ENCODE measurements at regions of chr17 and their contacts with region 1.

Region 1: GRCh38 chr17:48307814-48308411 is 122.1 kb downstream of the SKAP1 start:
- DNase-seq: peak; percentile 72 to 79 (median 75)
- H3K4me3 ChIP-seq: no peak overlapping the region
- H3K27ac ChIP-seq: no peak overlapping the region
- H3K4me1 ChIP-seq: no peaks in the 10 kb centered on the region
- H3K27me3 ChIP-seq: no peaks in the 10 kb centered on the region

Region 2: DNA sequence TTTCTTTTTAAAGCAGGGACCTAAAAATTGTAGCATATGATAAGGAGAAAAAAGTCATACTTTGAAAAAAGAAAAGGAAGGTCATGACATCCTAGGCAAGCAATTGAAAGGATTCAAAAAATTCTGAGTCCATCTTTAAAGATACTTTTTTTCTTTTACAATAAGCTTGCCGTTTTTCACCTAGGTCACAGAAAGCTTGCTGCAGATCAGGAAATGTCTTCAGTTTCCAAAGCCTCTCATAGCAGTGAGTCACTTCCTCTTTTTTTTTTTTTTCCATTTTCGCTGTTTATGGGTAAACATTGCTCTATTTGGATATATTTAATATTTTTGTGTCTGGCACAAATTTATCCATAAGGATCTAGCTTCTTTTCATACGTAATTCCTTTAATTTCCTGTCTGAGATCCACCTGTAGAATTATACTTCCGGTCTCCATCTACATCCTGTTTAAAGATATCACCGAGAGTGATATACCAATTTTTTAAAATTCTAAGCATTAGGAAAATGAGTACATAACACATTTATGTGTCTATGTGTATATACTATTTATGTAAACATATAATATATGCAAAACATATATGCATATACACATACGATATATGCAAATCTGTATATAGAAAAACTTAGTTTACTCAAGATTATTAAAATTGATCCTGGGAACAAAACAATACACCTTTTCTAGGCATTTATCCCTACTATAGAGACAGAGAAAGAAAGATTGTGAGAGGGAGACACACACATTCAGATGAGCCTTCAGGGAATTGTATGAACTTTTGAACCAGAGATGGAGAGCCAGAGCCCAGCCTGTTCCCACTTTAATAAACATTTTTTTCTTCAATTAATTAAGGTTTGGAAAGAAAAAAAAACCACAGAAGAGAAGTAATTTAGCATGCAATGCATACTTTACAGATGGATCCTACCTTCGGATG is 12.3 kb before region 1 on chr17:
- CTCF ChIA-PET with region 1: interaction called, 21 read pairs
- POLR2A ChIA-PET with region 1: no interaction called
- DNase-seq: peak; percentile 63 to 89 (median 85)
- H3K4me3 ChIP-seq: peak overlapping the region in 6 of 7 experiments; percentile 32 to 75 (median 60)
- H3K27ac ChIP-seq: peak overlapping the region; percentile 73 to 80
- H3K4me1 ChIP-seq: peaks cover 11 to 23% (median 17%) of the 10 kb centered on the region in 4 experiments
- H3K27me3 ChIP-seq: no peaks in the 10 kb centered on the region

Region 3: GRCh38 chr17:48328457-48328856 is 20.5 kb after region 1 on chr17:
- CTCF ChIA-PET with region 1: interaction called, 11 read pairs
- POLR2A ChIA-PET with region 1: interaction called, 3 read pairs
- DNase-seq: peak in 1 of 3 donors; percentile 8
- H3K4me3 ChIP-seq: no peak overlapping the region
- H3K27ac ChIP-seq: no peak overlapping the region
- H3K4me1 ChIP-seq: peaks cover 0 to 3% (median 1%) of the 10 kb centered on the region in 4 experiments
- H3K27me3 ChIP-seq: no peaks in the 10 kb centered on the region

Region 4: DNA sequence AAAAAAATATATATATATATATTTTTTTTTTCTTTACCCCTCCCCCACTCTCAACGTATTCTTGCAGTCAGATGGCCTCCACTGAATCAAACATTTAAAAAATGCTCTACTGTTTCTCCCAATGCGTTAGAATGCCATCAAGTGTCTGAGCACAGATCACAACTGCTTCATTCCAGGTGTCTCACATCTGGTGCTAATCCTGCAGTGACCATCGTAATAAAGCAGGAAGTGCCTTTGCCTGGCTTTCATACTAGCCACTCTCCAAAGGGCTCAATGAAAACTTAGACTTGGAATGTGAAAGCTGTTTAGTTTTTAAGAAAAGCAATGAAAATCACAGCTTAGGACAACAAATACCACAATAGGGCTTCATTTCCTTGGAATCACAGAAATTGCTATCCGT is 84.9 kb after region 1 on chr17:
- CTCF ChIA-PET with region 1: no interaction called
- POLR2A ChIA-PET with region 1: no interaction called
- DNase-seq: no peak
- H3K4me3 ChIP-seq: no peak overlapping the region
- H3K27ac ChIP-seq: no peak overlapping the region
- H3K4me1 ChIP-seq: peaks cover 0 to 15% (median 4%) of the 10 kb centered on the region in 4 experiments
- H3K27me3 ChIP-seq: peaks cover 0 to 4% (median 0%) of the 10 kb centered on the region in 5 experiments

Measured in common myeloid progenitor, CD34-positive (primary cell).